Ascending aorta (tissue), 2 donors: ENCODE measurements at regions of chr19 and their contacts with region 1.

Region 1: GRCh38 chr19:12400633-12401502 is at the start of gene ZNF799:
- DNase-seq: peak; percentile 95 to 99
- H3K4me3 ChIP-seq: peak within 1 kb of the TSS; percentile 77 to 95
- H3K27ac ChIP-seq: peak within 1 kb of the TSS; percentile 74 to 80
- H3K4me1 ChIP-seq: peaks cover 3 to 4% of the 10 kb centered on the region in 2 donors
- H3K27me3 ChIP-seq: no peaks in the 10 kb centered on the region
- CTCF ChIP-seq: no peak
- total RNA-seq, gene ZNF799: 3.1 TPM

Region 2: DNA sequence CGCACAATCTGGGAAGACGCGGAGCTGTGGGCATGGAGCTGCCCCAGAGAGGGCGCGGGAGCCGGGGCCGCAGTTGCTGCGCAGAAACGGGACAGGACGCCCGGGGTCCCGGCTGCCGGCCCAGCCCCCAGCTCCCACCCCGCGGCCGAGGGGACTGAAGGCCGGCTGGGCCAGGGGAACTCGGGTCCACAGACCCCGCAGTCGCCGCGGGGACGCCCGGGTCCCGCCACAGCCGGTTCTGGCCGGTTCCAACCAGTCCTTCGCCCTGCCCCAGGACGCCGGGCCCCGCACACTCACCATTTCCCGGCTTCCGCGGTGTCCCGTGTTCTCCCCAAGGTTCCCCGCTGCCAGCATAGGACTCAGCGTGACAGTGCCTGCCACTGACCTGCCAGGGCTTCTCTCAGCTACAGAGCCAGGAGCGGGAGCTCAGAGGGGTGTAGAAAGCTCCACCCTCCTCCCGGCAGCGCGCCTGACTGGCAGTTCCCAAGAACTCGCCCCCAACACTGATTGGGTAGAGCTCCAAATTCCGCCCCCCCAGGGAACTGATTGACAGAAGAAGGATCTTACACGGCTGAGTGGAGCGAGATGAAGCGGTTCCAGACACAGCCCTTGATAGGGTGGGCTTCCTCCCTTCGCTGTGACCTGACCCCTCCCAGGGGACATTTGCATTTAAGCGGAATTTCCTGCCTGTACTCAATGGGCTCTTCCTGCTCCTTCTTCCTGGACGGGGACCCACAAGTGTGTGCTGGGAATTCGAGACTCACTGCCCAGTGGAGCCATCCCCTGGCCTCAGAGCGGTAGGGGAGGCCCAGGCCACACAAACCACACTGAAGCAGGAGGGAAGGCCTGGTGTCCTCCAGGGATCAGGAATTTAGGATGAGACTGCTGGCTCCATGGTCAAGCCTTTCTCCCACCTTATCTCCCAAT is 35.4 kb before region 1 on chr19 and contains the start of gene ZNF442:
- intact Hi-C with region 1: loop called (anchors 2 kb)
- DNase-seq: peak; percentile 84 to 98
- H3K4me3 ChIP-seq: peak within 1 kb of the TSS; percentile 79 to 91
- H3K27ac ChIP-seq: peak within 1 kb of the TSS; percentile 90 to 94
- H3K4me1 ChIP-seq: peaks cover 0 to 3% of the 10 kb centered on the region in 2 donors
- H3K27me3 ChIP-seq: no peaks in the 10 kb centered on the region
- CTCF ChIP-seq: peak; percentile 63 to 75 (median 65)
- total RNA-seq, gene ZNF442: 0.21 TPM

Region 3: GRCh38 chr19:12425236-12425887 is 24.5 kb after region 1 on chr19:
- intact Hi-C with region 1: no loop called
- DNase-seq: no peak
- H3K4me3 ChIP-seq: no peak overlapping the region
- H3K27ac ChIP-seq: no peak overlapping the region
- H3K4me1 ChIP-seq: no peaks in the 10 kb centered on the region
- H3K27me3 ChIP-seq: no peaks in the 10 kb centered on the region
- CTCF ChIP-seq: no peak

Region 4: DNA sequence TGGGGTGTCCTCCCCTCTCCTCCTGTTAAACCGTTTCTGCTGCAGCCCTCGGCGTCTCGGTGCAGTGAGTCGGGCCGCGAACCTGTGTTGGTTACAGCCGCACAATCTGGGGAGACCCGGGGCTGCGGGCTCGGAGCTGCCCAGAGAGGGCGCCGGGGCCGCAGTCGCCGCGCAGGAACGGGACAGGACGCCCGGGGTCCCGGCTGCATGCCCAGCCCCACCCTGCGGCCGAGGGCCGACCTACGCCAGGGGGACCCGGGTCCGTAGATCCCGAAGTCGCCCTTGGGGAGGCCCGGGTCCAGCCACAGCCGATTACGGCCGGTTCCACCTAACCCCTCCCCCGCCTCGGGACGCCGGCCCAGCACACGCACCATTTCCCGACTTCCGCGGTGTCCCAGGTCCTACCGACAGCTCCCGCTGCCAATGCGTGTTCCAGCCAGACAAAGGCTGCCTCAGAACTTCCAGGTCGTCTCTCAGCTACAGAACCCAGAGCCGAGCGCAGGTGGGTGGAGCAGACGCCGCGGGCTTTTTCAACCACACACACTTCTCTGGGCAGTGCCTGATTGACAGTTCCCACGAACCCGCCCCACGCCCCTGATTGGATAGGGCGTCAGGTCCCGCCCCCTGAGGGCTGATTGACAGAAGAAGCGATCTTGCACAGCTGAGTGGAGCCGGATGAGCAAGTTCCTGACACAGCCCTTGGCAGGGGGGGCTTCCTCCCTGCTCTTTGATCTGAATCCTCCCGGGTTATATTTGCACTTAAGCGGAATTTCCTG is 39.9 kb after region 1 on chr19 and contains the start of gene ZNF443:
- intact Hi-C with region 1: loop called (anchors 5 kb)
- DNase-seq: peak; percentile 99
- H3K4me3 ChIP-seq: peak within 1 kb of the TSS; percentile 77 to 81
- H3K27ac ChIP-seq: peak within 1 kb of the TSS; percentile 80 to 81
- H3K4me1 ChIP-seq: no peaks in the 10 kb centered on the region
- H3K27me3 ChIP-seq: no peaks in the 10 kb centered on the region
- CTCF ChIP-seq: peak in 1 of 3 experiments; percentile 17
- total RNA-seq, gene ZNF443: 4.0 TPM

Region 5: GRCh38 chr19:12484371-12485051 is 83.6 kb after region 1 on chr19 and contains the start of gene ZNF709:
- intact Hi-C with region 1: loop called (anchors 10 kb)
- DNase-seq: peak; percentile 63 to 94
- H3K4me3 ChIP-seq: peak within 1 kb of the TSS; percentile 86 to 98
- H3K27ac ChIP-seq: peak within 1 kb of the TSS; percentile 74 to 76
- H3K4me1 ChIP-seq: peaks cover 0 to 15% of the 10 kb centered on the region in 2 donors
- H3K27me3 ChIP-seq: no peaks in the 10 kb centered on the region
- CTCF ChIP-seq: no peak
- total RNA-seq, gene ZNF709: 3.4 TPM

Region 6: DNA sequence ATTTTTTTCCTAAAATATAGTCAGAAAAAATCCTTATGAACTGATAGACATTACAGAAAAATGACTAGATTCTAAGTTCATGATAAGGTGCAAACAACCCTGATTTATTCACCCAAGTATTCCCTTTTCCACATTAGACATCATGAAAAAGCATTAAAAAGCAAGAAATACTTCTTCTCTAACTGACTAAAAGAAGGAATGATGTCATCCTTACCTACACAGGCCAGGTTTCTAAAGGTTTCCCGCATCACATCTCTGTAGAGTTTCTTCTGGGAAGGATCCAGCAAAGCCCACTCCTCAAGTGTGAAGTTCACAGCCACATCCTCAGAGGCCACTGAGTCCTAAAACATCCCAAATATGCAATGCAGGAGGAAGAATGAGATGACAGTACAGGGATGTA is 127.5 kb after region 1 on chr19:
- intact Hi-C with region 1: no loop called
- DNase-seq: no peak
- H3K4me3 ChIP-seq: no peak overlapping the region
- H3K27ac ChIP-seq: no peak overlapping the region
- H3K4me1 ChIP-seq: no peaks in the 10 kb centered on the region
- H3K27me3 ChIP-seq: no peaks in the 10 kb centered on the region
- CTCF ChIP-seq: no peak